Activated CD8-positive, alpha-beta T cell treated with anti-CD3 and anti-CD28 coated beads for 36 hours (primary cell): ENCODE measurements at regions of chr20 and their contacts with region 1.

Region 1: GRCh38 chr20:6767536-6768227 is at the start of gene BMP2:
- DNase-seq: peak; percentile 4
- ATAC-seq: peak; percentile 39
- H3K4me3 Mint-ChIP-seq: no peak within 1 kb of the TSS
- H3K27ac Mint-ChIP-seq: no peak within 1 kb of the TSS
- H3K4me1 Mint-ChIP-seq: peaks cover 2% of the 10 kb centered on the region
- H3K27me3 Mint-ChIP-seq: peaks cover 42% of the 10 kb centered on the region
- CTCF ChIP-seq: no peak
- total RNA-seq, gene BMP2: not detected

Region 2: DNA sequence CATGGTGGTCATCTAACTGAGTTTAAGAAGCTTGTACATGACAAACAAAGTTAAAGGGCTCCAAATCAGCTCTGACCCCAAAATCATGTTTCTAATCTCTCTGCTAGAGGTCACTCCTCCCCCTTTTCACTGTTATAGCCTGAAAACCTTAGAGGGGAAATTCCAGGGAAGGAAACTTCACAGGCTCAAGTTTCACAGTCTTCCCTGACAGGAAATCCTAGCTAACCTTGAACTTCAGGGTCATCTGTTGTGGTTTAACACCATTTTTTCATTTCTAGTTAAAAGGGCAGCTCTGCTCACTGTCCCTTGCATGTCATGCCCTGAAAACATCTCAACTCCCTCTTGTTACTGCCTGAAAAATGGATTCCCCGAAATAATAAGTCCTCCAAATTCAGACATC is 104.6 kb before region 1 on chr20:
- CTCF ChIA-PET with region 1: no interaction called
- POLR2A ChIA-PET with region 1: no interaction called
- intact Hi-C with region 1: no loop called
- DNase-seq: no peak
- ATAC-seq: no peak
- H3K4me3 Mint-ChIP-seq: no peak overlapping the region
- H3K27ac Mint-ChIP-seq: no peak overlapping the region
- H3K4me1 Mint-ChIP-seq: no peaks in the 10 kb centered on the region
- H3K27me3 Mint-ChIP-seq: no peaks in the 10 kb centered on the region
- CTCF ChIP-seq: no peak

Region 3: GRCh38 chr20:7682916-7683315 is 915.2 kb after region 1 on chr20:
- CTCF ChIA-PET with region 1: no interaction called
- POLR2A ChIA-PET with region 1: no interaction called
- intact Hi-C with region 1: loop called (anchors 10 kb)
- DNase-seq: no peak
- ATAC-seq: no peak
- H3K4me3 Mint-ChIP-seq: no peak overlapping the region
- H3K27ac Mint-ChIP-seq: no peak overlapping the region
- H3K4me1 Mint-ChIP-seq: no peaks in the 10 kb centered on the region
- H3K27me3 Mint-ChIP-seq: no peaks in the 10 kb centered on the region
- CTCF ChIP-seq: no peak

Region 4: DNA sequence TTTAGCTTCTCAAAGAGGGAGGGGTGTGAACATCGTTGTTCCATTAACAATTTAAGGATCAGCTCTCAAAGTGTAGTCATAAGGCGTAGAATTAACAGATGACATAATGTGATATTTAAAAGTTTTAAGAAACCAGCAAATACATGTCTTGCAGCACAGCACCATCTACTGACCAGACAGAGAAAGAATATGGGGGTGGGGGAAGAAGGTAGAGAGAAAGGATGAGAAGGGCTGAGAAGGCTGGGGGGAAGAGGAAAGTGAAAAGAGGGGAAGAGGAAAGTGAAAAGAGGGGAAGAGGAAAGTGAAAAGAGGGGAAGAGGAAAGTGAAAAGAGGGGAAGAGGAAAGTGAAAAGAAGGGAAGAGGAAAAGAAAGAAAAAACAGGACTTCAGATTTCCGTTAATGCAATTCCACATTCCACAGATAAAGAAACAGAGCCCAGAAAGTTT is 1091.7 kb after region 1 on chr20:
- CTCF ChIA-PET with region 1: no interaction called
- POLR2A ChIA-PET with region 1: no interaction called
- intact Hi-C with region 1: loop called (anchors 10 kb)
- DNase-seq: peak; percentile 12
- ATAC-seq: no peak
- H3K4me3 Mint-ChIP-seq: no peak overlapping the region
- H3K27ac Mint-ChIP-seq: no peak overlapping the region
- H3K4me1 Mint-ChIP-seq: no peaks in the 10 kb centered on the region
- H3K27me3 Mint-ChIP-seq: peaks cover 2% of the 10 kb centered on the region
- CTCF ChIP-seq: peak; percentile 41